ENCODE measurements at regions of chr11 and their contacts with region 1.

Region 1: DNA sequence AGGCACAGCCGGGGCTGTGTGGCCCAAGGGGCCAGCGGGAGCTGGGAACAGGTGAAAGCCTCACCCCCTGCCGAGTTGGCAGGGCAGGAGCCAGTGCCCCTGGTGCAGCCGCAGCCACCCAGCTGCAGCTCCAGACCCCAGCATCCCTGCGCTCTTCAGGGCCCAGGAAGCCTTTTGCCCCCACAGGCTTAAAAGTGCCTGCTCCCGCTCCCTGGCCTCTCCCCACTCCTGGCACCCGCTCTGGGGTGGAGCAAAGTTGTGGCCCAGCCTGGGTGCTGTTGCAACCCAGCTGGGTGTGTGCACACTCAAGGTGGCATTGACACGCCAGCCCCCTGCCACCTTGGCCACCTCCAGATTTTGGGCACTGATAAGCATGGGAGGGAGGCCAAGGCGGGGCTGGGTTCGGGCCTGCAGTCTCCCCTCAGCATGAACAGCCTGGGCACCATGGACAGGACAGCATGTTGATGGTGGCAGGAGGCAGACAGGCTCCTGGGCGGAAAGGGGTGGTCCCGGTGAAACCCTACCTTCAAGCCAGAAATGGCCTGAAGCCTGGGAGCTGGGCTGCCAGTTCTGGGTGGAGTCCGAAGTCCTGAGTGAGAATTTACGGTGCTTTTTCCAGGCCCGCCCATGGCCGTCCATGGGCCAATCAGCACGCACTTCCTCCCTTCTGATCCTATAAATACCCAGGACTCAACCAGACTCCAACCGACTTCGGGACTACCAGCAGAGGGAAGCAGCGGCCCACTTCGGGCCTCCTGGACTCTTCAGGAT is 23.5 kb upstream of the RNASEH2C start:
- DNase-seq: peak; percentile 71
- ATAC-seq: peak; percentile 99
- H3K4me3 Mint-ChIP-seq: no peak overlapping the region
- H3K27ac Mint-ChIP-seq: no peak overlapping the region
- H3K4me1 Mint-ChIP-seq: no peaks in the 10 kb centered on the region
- H3K27me3 Mint-ChIP-seq: peaks cover 38% of the 10 kb centered on the region
- CTCF ChIP-seq: no peak

Region 2: GRCh38 chr11:65700391-65700790 is 43.7 kb before region 1 on chr11:
- CTCF ChIA-PET with region 1: no interaction called
- POLR2A ChIA-PET with region 1: no interaction called
- DNase-seq: no peak
- ATAC-seq: no peak
- H3K4me3 Mint-ChIP-seq: no peak overlapping the region
- H3K27ac Mint-ChIP-seq: no peak overlapping the region
- H3K4me1 Mint-ChIP-seq: no peaks in the 10 kb centered on the region
- H3K27me3 Mint-ChIP-seq: peaks cover 14% of the 10 kb centered on the region
- CTCF ChIP-seq: no peak

Region 3: GRCh38 chr11:65711785-65712632 is 32.1 kb before region 1 on chr11 and contains the start of gene KAT5:
- CTCF ChIA-PET with region 1: interaction called, 12 read pairs
- POLR2A ChIA-PET with region 1: no interaction called
- DNase-seq: peak; percentile 99
- ATAC-seq: peak; percentile 93
- H3K4me3 Mint-ChIP-seq: peak within 1 kb of the TSS; percentile 82
- H3K27ac Mint-ChIP-seq: peak within 1 kb of the TSS; percentile 96
- H3K4me1 Mint-ChIP-seq: 0 out of 2 replicates have a peak, but pooled peaks cover 3% of the 10 kb centered on the region
- H3K27me3 Mint-ChIP-seq: peaks cover 6% of the 10 kb centered on the region
- CTCF ChIP-seq: peak; percentile 86
- total RNA-seq, gene KAT5: 44.9 to 56.6 TPM (median 46.0 TPM) in 3 replicates

Region 4: DNA sequence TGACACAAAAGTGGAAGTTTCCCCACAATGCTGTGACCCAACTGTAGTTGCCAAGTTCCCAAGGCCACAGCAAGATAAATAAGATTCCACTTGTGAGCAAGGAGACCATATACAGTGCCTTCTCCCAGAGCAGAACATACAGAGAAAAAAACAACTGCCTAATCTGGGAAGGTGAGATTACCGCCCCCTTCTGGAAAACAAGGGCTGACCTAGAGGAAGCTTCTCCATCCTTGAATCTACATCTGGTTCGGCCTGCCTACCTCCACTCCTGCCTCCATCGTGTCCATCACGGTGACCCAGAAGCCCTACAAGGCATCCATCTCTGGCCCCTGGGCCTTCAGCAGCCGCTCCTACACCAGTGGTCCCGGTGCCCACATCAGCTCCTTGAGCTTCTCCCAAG is 17.5 kb before region 1 on chr11:
- CTCF ChIA-PET with region 1: interaction called, 10 read pairs
- POLR2A ChIA-PET with region 1: no interaction called
- DNase-seq: no peak
- ATAC-seq: peak; percentile 77
- H3K4me3 Mint-ChIP-seq: no peak overlapping the region
- H3K27ac Mint-ChIP-seq: no peak overlapping the region
- H3K4me1 Mint-ChIP-seq: no peaks in the 10 kb centered on the region
- H3K27me3 Mint-ChIP-seq: peaks cover 18% of the 10 kb centered on the region
- CTCF ChIP-seq: no peak; the same call in 1 of the 2 replicates

Region 5: DNA sequence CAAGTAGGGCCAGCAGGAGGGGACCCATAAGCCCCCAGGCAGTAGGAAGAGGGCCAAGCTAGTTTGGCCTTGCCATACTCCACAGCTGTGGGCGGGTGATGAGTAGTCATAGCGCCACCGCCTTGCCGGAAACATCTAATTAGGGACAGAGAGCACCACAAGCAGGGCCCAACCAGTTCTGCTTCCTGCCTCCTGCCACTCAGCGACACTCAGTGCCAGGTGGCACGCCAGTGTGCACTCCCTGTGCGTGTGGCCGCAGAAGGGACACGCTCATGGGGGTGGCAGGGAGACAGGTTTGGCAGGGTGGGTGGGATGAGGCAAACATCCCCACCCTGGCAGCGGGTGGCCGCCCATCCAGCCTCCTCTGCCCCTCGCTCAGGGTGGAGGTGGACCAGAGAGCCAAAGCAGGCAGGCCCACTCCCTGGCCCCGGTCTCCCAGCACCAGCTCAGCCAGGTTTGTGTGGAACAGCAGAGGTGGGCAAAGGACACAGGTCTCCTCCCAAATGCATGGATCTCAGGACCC is 47.6 kb after region 1 on chr11:
- CTCF ChIA-PET with region 1: interaction called, 24 read pairs
- POLR2A ChIA-PET with region 1: no interaction called
- DNase-seq: no peak
- ATAC-seq: no peak
- H3K4me3 Mint-ChIP-seq: no peak overlapping the region
- H3K27ac Mint-ChIP-seq: no peak overlapping the region
- H3K4me1 Mint-ChIP-seq: peaks cover 32% of the 10 kb centered on the region
- H3K27me3 Mint-ChIP-seq: peaks cover 18% of the 10 kb centered on the region
- CTCF ChIP-seq: no peak

Region 6: GRCh38 chr11:65850831-65851811 is 107.0 kb after region 1 on chr11:
- CTCF ChIA-PET with region 1: interaction called, 22 read pairs
- POLR2A ChIA-PET with region 1: no interaction called
- DNase-seq: peak; percentile 63
- ATAC-seq: peak; percentile 65
- H3K4me3 Mint-ChIP-seq: no peak overlapping the region
- H3K27ac Mint-ChIP-seq: peak overlapping the region; percentile 41; the same call in 1 of the 2 replicates
- H3K4me1 Mint-ChIP-seq: peaks cover 17% of the 10 kb centered on the region
- H3K27me3 Mint-ChIP-seq: peaks cover 10% of the 10 kb centered on the region
- CTCF ChIP-seq: peak; percentile 69